RWPE1 (cell line): ENCODE measurements at regions of chr2 and their contacts with region 1.

Region 1: GRCh38 chr2:44981136-44982108 is 27.8 kb downstream of the SIX2 start:
- DNase-seq: peak; percentile 72
- H3K27ac ChIP-seq: no peak overlapping the region
- CTCF ChIP-seq: peak; percentile 80

Region 2: DNA sequence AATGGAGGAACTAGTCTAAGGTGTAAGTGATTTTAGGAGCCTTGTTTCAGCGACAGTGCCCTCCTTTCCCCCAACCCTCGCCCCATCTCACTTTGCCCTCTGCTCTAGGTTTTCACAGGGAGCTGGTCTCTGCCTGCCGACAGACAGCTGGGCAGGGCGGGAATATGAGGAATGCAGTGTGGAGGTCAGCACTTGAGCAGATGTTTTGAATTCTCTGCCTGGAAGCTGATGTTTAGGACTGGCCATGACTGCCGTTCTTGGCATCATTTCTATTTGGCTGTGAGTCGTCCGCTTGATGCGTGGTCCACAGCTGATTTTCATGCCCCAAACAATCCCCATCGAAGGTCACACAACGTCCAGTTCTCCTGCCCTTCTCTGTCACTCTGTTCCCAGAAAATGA is 95.0 kb before region 1 on chr2:
- CTCF ChIA-PET with region 1: no interaction called
- POLR2A ChIA-PET with region 1: no interaction called
- DNase-seq: no peak
- H3K27ac ChIP-seq: no peak overlapping the region
- CTCF ChIP-seq: no peak

Region 3: GRCh38 chr2:45169339-45170190 is 188.1 kb after region 1 on chr2:
- CTCF ChIA-PET with region 1: interaction called, 13 read pairs
- POLR2A ChIA-PET with region 1: no interaction called
- DNase-seq: peak; percentile 15
- H3K27ac ChIP-seq: peak overlapping the region; percentile 81
- CTCF ChIP-seq: 0 out of 2 replicates have a peak, but pooled peaks have one; percentile 7

Region 4: GRCh38 chr2:45494269-45494977 is 513.0 kb after region 1 on chr2:
- CTCF ChIA-PET with region 1: interaction called, 32 read pairs
- POLR2A ChIA-PET with region 1: no interaction called
- DNase-seq: peak; percentile 29
- H3K27ac ChIP-seq: no peak overlapping the region
- CTCF ChIP-seq: peak; percentile 85